Caco-2 (cell line): ENCODE measurements at regions of chr14 and their contacts with region 1.

Region 1: GRCh38 chr14:21964180-21964579 is 290.6 kb upstream of the OR4E1 start:
- DNase-seq: no peak
- H3K4me3 ChIP-seq: no peak overlapping the region
- H3K4me3 Mint-ChIP-seq: no peak overlapping the region
- H3K27ac Mint-ChIP-seq: no peak overlapping the region
- H3K4me1 ChIP-seq: no peaks in the 10 kb centered on the region
- H3K4me1 Mint-ChIP-seq: no peaks in the 10 kb centered on the region
- H3K27me3 ChIP-seq: no peaks in the 10 kb centered on the region
- H3K27me3 Mint-ChIP-seq: peaks cover 13% of the 10 kb centered on the region
- CTCF ChIP-seq: no peak

Region 2: DNA sequence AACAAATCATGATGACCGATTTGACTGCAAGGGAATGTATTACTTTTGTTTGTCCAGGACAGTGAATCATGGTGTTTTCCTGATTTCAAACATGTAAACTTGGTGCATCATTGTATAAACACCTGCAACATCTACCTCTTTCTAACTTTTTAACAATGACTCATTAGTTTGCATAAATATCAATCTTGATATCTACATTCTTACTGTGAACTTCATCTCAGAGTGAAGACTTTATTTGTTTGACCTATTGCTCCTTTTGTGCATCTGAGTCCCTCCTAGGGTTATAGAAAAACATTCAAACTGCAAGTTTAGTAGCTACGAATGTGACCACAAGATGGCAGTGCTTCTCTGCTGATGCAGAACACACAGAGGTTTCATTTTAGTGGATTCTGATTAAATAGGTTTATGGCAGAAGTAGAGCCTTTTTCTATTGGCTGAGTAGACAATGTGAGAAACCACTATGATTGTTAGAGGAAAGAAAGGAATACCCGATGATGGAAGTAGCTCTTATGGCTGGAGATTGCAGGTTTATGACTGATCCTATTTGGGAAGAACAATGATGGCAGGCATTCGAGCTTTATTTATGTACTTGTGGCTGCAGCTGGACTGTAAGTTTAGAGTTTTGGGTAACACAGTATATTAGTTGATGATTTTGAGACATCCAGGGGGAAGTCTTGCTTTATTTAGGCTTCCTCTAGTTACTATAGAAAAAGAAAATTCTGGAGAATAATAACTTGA is 46.3 kb before region 1 on chr14:
- CTCF ChIA-PET with region 1: no interaction called
- POLR2A ChIA-PET with region 1: no interaction called
- intact Hi-C with region 1: no loop called
- DNase-seq: peak in 1 of 2 experiments; percentile 42
- H3K4me3 ChIP-seq: no peak overlapping the region
- H3K4me3 Mint-ChIP-seq: no peak overlapping the region
- H3K27ac Mint-ChIP-seq: no peak overlapping the region
- H3K4me1 ChIP-seq: no peaks in the 10 kb centered on the region
- H3K4me1 Mint-ChIP-seq: no peaks in the 10 kb centered on the region
- H3K27me3 ChIP-seq: no peaks in the 10 kb centered on the region
- H3K27me3 Mint-ChIP-seq: peaks cover 6% of the 10 kb centered on the region
- CTCF ChIP-seq: peak; percentile 50 to 81

Region 3: GRCh38 chr14:21997300-21997699 is 33.1 kb after region 1 on chr14:
- CTCF ChIA-PET with region 1: interaction called, 10 read pairs
- POLR2A ChIA-PET with region 1: no interaction called
- intact Hi-C with region 1: no loop called
- DNase-seq: peak in 1 of 2 experiments; percentile 10
- H3K4me3 ChIP-seq: no peak overlapping the region
- H3K4me3 Mint-ChIP-seq: no peak overlapping the region
- H3K27ac Mint-ChIP-seq: no peak overlapping the region
- H3K4me1 ChIP-seq: no peaks in the 10 kb centered on the region
- H3K4me1 Mint-ChIP-seq: peaks cover 4% of the 10 kb centered on the region
- H3K27me3 ChIP-seq: no peaks in the 10 kb centered on the region
- H3K27me3 Mint-ChIP-seq: peaks cover 7% of the 10 kb centered on the region
- CTCF ChIP-seq: peak; percentile 15 to 56